ENCODE measurements at regions of chr12 and their contacts with region 1.

Region 1: GRCh38 chr12:50545786-50546185 is 41.0 kb downstream of the DIP2B start:
- DNase-seq: no peak
- H3K4me3 ChIP-seq: no peak overlapping the region
- H3K4me3 Mint-ChIP-seq: no peak overlapping the region
- H3K27ac Mint-ChIP-seq: peak overlapping the region; percentile 66
- H3K4me1 ChIP-seq: peaks cover 54% of the 10 kb centered on the region
- H3K4me1 Mint-ChIP-seq: peaks cover 22% of the 10 kb centered on the region
- H3K27me3 ChIP-seq: no peaks in the 10 kb centered on the region
- H3K27me3 Mint-ChIP-seq: no peaks in the 10 kb centered on the region
- CTCF ChIP-seq: no peak

Region 2: GRCh38 chr12:50390284-50390683 is 155.5 kb before region 1 on chr12:
- CTCF ChIA-PET with region 1: no interaction called
- POLR2A ChIA-PET with region 1: no interaction called
- intact Hi-C with region 1: no loop called
- DNase-seq: peak in 1 of 2 experiments; percentile 42
- H3K4me3 ChIP-seq: no peak overlapping the region
- H3K4me3 Mint-ChIP-seq: no peak overlapping the region
- H3K27ac Mint-ChIP-seq: peak overlapping the region; percentile 68
- H3K4me1 ChIP-seq: peaks cover 55% of the 10 kb centered on the region
- H3K4me1 Mint-ChIP-seq: peaks cover 38% of the 10 kb centered on the region
- H3K27me3 ChIP-seq: no peaks in the 10 kb centered on the region
- H3K27me3 Mint-ChIP-seq: no peaks in the 10 kb centered on the region
- CTCF ChIP-seq: no peak

Region 3: GRCh38 chr12:50400598-50401364 is 145.0 kb before region 1 on chr12 and contains the start of gene LARP4:
- CTCF ChIA-PET with region 1: no interaction called
- POLR2A ChIA-PET with region 1: no interaction called
- intact Hi-C with region 1: no loop called
- DNase-seq: peak; percentile 98
- H3K4me3 ChIP-seq: peak within 1 kb of the TSS; percentile 83
- H3K4me3 Mint-ChIP-seq: peak within 1 kb of the TSS; percentile 99
- H3K27ac Mint-ChIP-seq: peak within 1 kb of the TSS; percentile 100
- H3K4me1 ChIP-seq: peaks cover 36% of the 10 kb centered on the region
- H3K4me1 Mint-ChIP-seq: peaks cover 34% of the 10 kb centered on the region
- H3K27me3 ChIP-seq: no peaks in the 10 kb centered on the region
- H3K27me3 Mint-ChIP-seq: no peaks in the 10 kb centered on the region
- CTCF ChIP-seq: no peak
- total RNA-seq, gene LARP4: 103 and 115 TPM in 2 replicates

Region 4: GRCh38 chr12:50533203-50533584 is 12.6 kb before region 1 on chr12:
- CTCF ChIA-PET with region 1: no interaction called
- POLR2A ChIA-PET with region 1: interaction called, 6 read pairs
- intact Hi-C with region 1: loop called (anchors 1 kb)
- DNase-seq: no peak
- H3K4me3 ChIP-seq: no peak overlapping the region
- H3K4me3 Mint-ChIP-seq: no peak overlapping the region
- H3K27ac Mint-ChIP-seq: no peak overlapping the region
- H3K4me1 ChIP-seq: peaks cover 54% of the 10 kb centered on the region
- H3K4me1 Mint-ChIP-seq: peaks cover 22% of the 10 kb centered on the region
- H3K27me3 ChIP-seq: no peaks in the 10 kb centered on the region
- H3K27me3 Mint-ChIP-seq: no peaks in the 10 kb centered on the region
- CTCF ChIP-seq: no peak

Region 5: DNA sequence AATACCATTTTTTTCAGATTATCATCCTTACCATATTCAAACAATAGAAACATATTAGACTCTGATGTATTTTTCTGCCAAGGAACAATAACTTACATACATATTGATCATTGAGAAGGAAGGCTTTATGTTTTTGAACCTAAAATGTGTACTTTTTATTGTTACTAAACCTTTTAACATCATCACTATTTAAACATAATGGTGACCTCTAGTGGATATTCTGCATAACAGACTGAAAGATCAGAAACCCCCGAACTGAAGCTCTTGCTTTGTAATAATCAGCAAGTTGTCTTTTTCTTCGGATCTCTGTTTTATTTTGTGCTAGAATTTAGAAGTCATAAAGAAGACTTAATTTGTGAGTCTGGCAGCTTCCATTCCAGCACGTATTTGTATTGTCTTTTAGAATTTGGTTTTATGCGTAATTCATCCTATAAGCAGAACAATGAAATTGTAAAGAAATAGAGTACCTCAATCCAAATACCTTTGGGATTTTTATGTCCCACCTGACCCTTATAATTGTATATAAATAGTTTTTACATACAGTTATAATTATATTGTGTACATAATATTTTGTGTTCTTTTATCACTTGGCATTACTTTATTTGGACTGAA is 92.2 kb after region 1 on chr12:
- CTCF ChIA-PET with region 1: interaction called, 3 read pairs
- POLR2A ChIA-PET with region 1: no interaction called
- intact Hi-C with region 1: loop called (anchors 2 kb)
- DNase-seq: peak in 1 of 2 experiments; percentile 37
- H3K4me3 ChIP-seq: no peak overlapping the region
- H3K4me3 Mint-ChIP-seq: no peak overlapping the region
- H3K27ac Mint-ChIP-seq: peak overlapping the region; percentile 74
- H3K4me1 ChIP-seq: peaks cover 51% of the 10 kb centered on the region
- H3K4me1 Mint-ChIP-seq: peaks cover 57% of the 10 kb centered on the region
- H3K27me3 ChIP-seq: no peaks in the 10 kb centered on the region
- H3K27me3 Mint-ChIP-seq: no peaks in the 10 kb centered on the region
- CTCF ChIP-seq: peak; percentile 73 to 83

Measured in Caco-2 (cell line).